Ascending aorta (tissue), 2 donors: ENCODE measurements at regions of chr11 and their contacts with region 1.

Region 1: GRCh38 chr11:73760679-73761402 is at the start of gene RAB6A:
- DNase-seq: peak; percentile 100
- H3K4me3 ChIP-seq: peak within 1 kb of the TSS; percentile 88 to 98
- H3K27ac ChIP-seq: peak within 1 kb of the TSS; percentile 97 to 99
- H3K4me1 ChIP-seq: peaks cover 0 to 17% of the 10 kb centered on the region in 2 donors
- H3K27me3 ChIP-seq: no peaks in the 10 kb centered on the region
- CTCF ChIP-seq: peak; percentile 28 to 73 (median 33)
- total RNA-seq, gene RAB6A: 86.3 TPM

Region 2: DNA sequence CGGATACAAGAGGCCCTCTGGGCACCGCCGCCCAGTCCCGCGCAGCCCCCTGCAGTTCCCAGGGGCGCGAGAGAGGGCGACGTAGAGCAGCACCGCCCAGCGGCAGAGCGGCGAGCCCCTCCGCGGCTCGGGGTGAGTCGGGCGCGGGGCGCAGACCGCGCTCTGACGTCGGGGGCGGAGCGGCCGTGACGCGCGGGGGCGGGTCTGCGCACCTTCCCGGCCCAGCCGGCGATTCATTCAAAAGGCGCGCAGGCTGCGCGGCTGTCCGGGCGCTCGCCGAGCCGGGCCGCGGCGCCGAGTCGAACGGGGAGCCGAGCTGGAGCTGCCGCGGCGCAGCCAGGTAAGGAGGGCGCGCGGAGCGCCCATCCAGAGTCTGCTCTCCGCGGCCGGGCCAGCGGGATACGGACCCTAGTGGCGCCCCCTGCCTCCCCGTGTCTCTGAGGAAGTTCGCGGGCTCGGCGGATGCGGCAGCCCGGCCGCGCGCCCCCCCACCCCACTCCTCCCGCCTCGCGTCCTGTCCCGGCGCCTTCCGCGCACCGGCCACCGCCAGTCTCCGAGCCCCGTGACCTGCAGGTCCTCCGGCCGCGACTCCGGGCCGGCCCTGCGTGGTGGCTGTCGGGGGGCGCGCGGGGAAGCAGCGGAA is 384.6 kb before region 1 on chr11 and contains the start of gene RELT:
- intact Hi-C with region 1: loop called (anchors 2 kb)
- DNase-seq: peak; percentile 50 to 93
- H3K4me3 ChIP-seq: peak within 1 kb of the TSS; percentile 73 to 79
- H3K27ac ChIP-seq: peak within 1 kb of the TSS; percentile 88 to 92
- H3K4me1 ChIP-seq: peaks cover 0 to 8% of the 10 kb centered on the region in 2 donors
- H3K27me3 ChIP-seq: no peaks in the 10 kb centered on the region
- CTCF ChIP-seq: peak; percentile 86 to 94 (median 89)
- total RNA-seq, gene RELT: 25.7 TPM

Region 3: DNA sequence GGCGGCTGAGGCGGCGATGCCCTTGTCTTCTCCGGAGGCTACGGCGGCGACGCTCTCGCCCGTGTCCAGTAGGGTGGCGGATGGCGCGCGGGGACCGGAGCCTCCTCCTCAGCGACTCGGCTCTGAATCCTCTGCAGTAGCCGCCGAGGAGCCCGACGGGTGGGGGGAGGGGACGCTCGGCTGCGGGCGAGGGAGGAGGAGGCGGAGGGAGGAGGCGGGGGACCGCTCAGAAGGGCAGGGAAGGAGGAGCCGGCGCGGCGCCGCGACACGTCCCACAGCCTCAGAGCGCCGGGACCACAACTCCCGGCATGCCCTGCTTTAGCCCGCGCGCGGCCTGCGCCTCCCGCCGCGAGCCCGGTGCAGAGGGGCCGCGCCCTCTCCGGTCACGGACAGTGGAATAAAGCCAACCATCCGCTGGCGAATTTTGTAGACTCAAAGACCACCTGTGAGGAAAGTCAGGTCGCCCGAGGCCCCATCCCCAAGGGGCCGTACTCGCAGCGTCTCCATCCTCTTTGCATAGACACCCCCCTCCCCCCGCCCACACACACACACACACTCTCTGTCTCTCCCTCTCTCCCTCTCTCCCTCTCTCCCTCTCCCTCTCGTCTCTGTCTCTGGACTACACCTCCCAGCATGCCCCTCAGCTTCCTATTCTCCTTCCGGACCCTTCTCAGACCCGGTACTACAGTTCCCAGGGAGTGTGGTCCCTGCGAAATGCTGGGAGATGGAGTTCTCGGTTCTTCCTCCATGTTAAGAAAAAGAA is 162.7 kb before region 1 on chr11 and contains the start of gene FAM168A:
- intact Hi-C with region 1: loop called (anchors 5 kb)
- DNase-seq: peak; percentile 76 to 96
- H3K4me3 ChIP-seq: peak within 1 kb of the TSS; percentile 79 to 86
- H3K27ac ChIP-seq: peak within 1 kb of the TSS; percentile 68 to 81
- H3K4me1 ChIP-seq: peaks cover 0 to 10% of the 10 kb centered on the region in 2 donors
- H3K27me3 ChIP-seq: no peaks in the 10 kb centered on the region
- CTCF ChIP-seq: peak in 2 of 3 experiments; percentile 33 to 38
- total RNA-seq, gene FAM168A: 44.1 TPM

Region 4: GRCh38 chr11:73779084-73779902 is 18.5 kb after region 1 on chr11:
- intact Hi-C with region 1: loop called (anchors 1 kb)
- DNase-seq: peak; percentile 97 to 99
- H3K4me3 ChIP-seq: peak overlapping the region; percentile 54 to 62
- H3K27ac ChIP-seq: peak overlapping the region; percentile 82 to 88
- H3K4me1 ChIP-seq: peaks cover 0 to 4% of the 10 kb centered on the region in 2 donors
- H3K27me3 ChIP-seq: no peaks in the 10 kb centered on the region
- CTCF ChIP-seq: no peak

Region 5: GRCh38 chr11:73876424-73877300 is 115.8 kb after region 1 on chr11 and contains the starts of genes COA4 and PAAF1:
- intact Hi-C with region 1: loop called (anchors 1 kb)
- DNase-seq: peak; percentile 79 to 96
- H3K4me3 ChIP-seq: peak within 1 kb of the TSS; percentile 73 to 86
- H3K27ac ChIP-seq: peak within 1 kb of the TSS; percentile 82 to 86
- H3K4me1 ChIP-seq: peaks cover 3 to 15% of the 10 kb centered on the region in 2 donors
- H3K27me3 ChIP-seq: no peaks in the 10 kb centered on the region
- CTCF ChIP-seq: no peak
- total RNA-seq, gene COA4: 92.7 TPM
- total RNA-seq, gene PAAF1: 36.3 TPM

Region 6: GRCh38 chr11:73982969-73983740 is 222.3 kb after region 1 on chr11:
- intact Hi-C with region 1: loop called (anchors 2 kb)
- DNase-seq: peak; percentile 82 to 97
- H3K4me3 ChIP-seq: peak overlapping the region; percentile 61 to 74
- H3K27ac ChIP-seq: peak overlapping the region; percentile 84 to 89
- H3K4me1 ChIP-seq: peaks cover 5 to 15% of the 10 kb centered on the region in 2 donors
- H3K27me3 ChIP-seq: no peaks in the 10 kb centered on the region
- CTCF ChIP-seq: no peak

Region 7: DNA sequence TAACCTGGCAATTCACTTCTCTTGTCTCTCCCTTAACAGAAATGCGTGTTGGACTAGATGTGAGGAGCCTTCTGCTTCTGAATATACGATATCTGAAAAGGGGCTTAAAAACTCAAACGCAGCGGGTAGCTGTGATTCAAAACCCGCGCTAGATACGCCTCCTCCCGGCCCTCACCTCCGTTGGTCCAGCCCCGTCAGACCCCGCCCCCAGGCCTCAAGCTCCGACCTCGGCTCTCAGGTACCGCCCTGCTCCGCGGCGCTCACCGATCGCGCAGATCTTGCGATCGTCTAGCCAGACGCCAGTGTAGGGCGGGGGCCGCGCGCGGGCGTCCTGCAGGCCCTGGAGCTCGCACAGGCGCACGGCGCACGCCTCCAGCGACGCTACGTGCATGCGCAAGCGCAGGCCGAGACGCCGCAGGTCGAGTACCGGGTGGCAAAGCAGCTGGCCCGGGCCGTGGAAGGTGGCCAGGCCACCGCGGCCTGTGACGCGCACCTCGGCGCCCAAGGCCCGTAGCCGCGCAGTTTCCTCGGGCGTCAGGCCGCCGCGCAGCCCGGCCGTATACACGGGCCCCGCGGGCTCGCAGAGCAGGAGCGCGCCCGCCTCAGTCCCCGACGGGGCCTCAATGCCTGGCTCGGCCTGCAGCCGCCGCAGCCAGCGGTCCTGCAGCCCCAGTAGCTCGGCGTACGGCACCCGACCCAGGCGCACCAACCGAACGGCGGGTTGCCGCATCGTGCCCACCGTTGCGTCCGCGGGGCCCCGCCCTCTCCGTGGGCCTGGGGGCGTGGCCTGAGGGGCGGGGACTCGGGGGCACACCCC is 732.3 kb after region 1 on chr11 and contains the start of gene LIPT2:
- intact Hi-C with region 1: loop called (anchors 5 kb)
- DNase-seq: peak; percentile 89 to 97
- H3K4me3 ChIP-seq: peak within 1 kb of the TSS; percentile 64 to 95
- H3K27ac ChIP-seq: peak within 1 kb of the TSS; percentile 90 to 99
- H3K4me1 ChIP-seq: peaks cover 0 to 6% of the 10 kb centered on the region in 2 donors
- H3K27me3 ChIP-seq: no peaks in the 10 kb centered on the region
- CTCF ChIP-seq: no peak
- total RNA-seq, gene LIPT2: not detected